ENCODE measurements at regions of chr10 and their contacts with region 1.

Region 1: DNA sequence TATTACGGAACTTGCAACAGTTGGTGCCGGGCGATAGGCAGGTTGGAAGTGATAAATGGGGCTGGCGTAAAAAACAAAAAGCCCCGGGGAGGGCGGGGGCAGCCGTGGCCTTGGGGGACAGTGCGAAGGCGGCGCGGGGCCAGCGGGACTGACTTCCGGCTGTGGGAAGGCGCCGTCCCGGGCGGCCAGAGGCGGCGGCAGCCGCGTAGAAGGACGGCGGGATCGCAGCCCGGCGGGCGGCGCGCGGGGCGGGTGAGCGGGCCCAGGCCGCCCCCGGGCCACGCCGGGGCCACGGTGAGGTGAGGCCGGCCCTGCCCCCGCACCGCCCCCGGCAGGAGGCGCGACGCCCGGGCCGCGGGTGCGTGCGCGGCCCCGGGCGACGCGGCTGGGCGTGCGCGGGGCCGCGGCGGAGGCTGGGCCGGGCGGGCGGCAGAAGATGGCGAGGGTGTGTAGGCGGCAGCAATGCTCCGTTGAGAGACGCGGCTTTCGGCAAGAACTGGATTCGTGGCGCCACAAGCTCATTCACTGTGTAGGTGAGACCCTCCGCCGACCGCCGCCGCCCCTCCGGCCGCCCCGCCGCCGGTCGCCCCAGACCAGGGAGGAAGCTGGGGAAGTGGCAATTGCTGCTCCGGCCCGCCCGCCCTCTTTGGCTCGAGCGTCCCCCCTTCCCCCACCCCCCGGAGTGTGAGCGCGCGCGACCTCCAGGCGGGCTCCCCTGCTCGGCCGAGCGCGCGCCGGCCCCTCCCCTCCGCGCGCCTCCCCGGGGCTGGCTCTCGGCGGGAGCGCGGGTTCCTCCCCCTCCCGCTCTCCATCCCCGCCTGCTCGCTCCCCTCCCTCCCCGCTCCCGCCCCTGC is at the start of gene LCOR:
- DNase-seq: peak; percentile 72
- ATAC-seq: peak; percentile 64
- H3K4me3 ChIP-seq: peak within 1 kb of the TSS; percentile 95
- H3K27ac ChIP-seq: peak within 1 kb of the TSS; percentile 58
- H3K4me1 ChIP-seq: peaks cover 27% of the 10 kb centered on the region
- H3K27me3 ChIP-seq: no peaks in the 10 kb centered on the region
- CTCF ChIP-seq: no peak
- total RNA-seq, gene LCOR: 10.5 and 21.0 TPM in 2 replicates

Region 2: DNA sequence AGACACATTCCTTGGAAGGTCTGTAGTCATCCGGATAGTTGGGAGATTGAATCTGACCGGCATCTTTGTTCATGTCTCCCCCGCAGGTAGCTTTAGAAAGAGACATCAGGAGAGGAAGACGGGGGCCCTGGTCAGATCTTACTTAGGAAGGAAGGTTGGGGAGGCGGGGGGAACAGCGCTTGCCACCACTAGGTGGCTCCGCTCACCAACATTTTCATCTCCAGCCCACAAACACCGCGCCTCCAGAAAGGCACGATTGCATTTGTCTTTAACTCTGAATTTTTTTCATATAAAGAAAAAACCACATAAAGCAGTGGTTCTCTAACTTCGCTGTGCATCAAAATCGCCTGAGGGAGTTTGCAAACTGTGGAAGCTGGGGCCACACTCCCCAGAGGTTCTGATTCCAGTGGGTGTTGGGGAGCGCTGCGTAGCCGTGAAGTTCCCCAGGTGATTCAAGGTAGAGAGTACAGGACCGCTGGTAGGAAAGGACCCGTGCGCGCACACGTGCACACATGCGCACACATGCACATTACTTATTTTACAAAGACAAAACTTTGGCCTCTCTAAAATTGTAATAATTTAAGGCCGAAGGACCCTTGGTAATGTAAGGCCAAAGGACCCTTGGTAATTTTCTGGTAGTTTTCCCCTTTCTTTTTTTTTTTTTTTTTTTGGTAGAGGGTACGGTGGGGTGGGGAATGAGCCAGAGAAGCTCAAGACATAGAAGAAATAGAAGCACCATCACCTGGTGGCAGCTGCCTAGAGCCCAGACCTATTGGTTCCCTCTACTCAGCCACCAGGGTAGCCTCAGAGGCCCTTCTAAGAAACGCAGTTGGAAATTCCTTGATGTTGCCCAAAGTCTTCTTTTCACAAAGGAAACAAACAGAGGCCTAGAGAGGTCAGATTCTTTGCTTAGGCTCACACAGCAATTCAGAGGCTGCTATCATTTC is 435.9 kb before region 1 on chr10:
- CTCF ChIA-PET with region 1: no interaction called
- POLR2A ChIA-PET with region 1: no interaction called
- intact Hi-C with region 1: loop called (anchors 1 kb)
- DNase-seq: peak; percentile 62
- ATAC-seq: peak; percentile 80
- H3K4me3 ChIP-seq: no peak overlapping the region
- H3K27ac ChIP-seq: no peak overlapping the region
- H3K4me1 ChIP-seq: no peaks in the 10 kb centered on the region
- H3K27me3 ChIP-seq: peaks cover 86% of the 10 kb centered on the region
- CTCF ChIP-seq: peak; percentile 83

Region 3: DNA sequence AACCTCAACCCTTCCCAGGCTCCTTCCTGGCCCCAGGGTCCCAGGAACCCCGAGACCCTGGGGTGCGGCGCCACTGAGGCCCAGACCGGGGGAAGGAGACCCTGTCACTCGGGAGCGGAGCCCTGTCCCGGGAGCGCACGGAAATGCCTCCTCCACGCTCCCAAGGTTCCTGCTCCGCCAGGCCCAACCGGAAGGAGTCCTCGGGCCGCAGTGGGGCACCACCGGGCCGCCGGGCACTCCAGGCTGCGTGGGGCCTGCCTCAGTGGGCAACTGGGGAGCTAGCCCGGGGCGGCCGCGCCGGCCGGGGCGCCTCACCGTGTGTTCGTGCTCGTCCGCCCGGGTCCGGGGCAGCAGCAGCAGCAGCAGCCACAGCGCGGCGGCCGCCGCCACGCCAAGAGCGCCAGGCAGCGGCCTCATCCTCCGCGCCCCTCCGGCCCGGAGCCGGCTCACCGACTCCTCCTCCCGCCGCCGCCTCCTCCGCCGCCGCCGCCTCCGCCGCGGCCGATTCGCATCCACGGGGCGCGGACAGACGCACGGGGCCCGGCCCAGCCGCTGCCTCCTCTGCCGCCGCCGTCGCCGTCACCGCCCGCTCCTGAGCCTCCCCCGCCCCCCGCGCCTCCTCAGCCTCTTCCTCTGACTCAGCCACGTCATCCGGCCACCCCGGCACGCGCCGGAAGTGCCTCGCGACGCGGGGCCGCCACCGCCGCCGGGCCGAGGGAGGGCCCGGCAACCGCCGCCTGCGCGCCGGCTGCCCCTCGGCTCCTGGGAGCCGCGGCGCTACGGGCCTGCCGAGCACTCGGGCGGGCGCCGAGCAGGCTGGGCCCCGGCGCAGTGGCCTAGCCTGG is 245.5 kb before region 1 on chr10 and contains the start of gene TM9SF3:
- CTCF ChIA-PET with region 1: no interaction called
- POLR2A ChIA-PET with region 1: no interaction called
- intact Hi-C with region 1: loop called (anchors 1 kb)
- DNase-seq: peak; percentile 84
- ATAC-seq: peak; percentile 79
- H3K4me3 ChIP-seq: peak within 1 kb of the TSS; percentile 87
- H3K27ac ChIP-seq: peak within 1 kb of the TSS; percentile 70
- H3K4me1 ChIP-seq: peaks cover 19% of the 10 kb centered on the region; the same call in 1 of the 2 replicates
- H3K27me3 ChIP-seq: no peaks in the 10 kb centered on the region
- CTCF ChIP-seq: no peak
- total RNA-seq, gene TM9SF3: 39.2 and 47.0 TPM in 2 replicates

Region 4: GRCh38 chr10:96651998-96652431 is 180.1 kb before region 1 on chr10:
- CTCF ChIA-PET with region 1: no interaction called
- POLR2A ChIA-PET with region 1: no interaction called
- intact Hi-C with region 1: no loop called
- DNase-seq: no peak
- ATAC-seq: no peak
- H3K4me3 ChIP-seq: no peak overlapping the region
- H3K27ac ChIP-seq: no peak overlapping the region
- H3K4me1 ChIP-seq: no peaks in the 10 kb centered on the region
- H3K27me3 ChIP-seq: no peaks in the 10 kb centered on the region
- CTCF ChIP-seq: no peak

Region 5: GRCh38 chr10:96719850-96720421 is 112.2 kb before region 1 on chr10:
- CTCF ChIA-PET with region 1: no interaction called
- POLR2A ChIA-PET with region 1: no interaction called
- intact Hi-C with region 1: loop called (anchors 5 kb)
- DNase-seq: peak; percentile 47
- ATAC-seq: peak; percentile 72
- H3K4me3 ChIP-seq: peak overlapping the region; percentile 77
- H3K27ac ChIP-seq: no peak overlapping the region
- H3K4me1 ChIP-seq: peaks cover 11% of the 10 kb centered on the region
- H3K27me3 ChIP-seq: no peaks in the 10 kb centered on the region
- CTCF ChIP-seq: peak; percentile 61

Region 6: DNA sequence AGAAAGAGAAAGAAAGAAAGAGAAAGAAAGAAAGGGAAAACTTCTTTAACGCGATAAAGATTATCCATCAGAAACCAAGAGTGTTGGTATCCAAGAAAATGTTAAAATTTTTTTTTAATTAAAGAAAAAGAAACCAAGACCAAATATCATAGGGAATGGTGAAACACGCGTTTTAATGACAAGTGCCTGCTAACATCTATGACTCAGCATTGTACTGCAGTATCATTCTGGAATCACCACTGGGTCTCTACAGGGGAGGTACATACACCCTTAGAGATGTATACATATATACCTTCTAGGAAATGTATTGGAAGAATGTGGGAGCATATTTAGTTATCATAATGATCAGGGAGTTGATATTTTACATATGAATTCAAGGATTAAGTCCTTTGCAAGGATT is 79.7 kb before region 1 on chr10:
- CTCF ChIA-PET with region 1: no interaction called
- POLR2A ChIA-PET with region 1: no interaction called
- intact Hi-C with region 1: no loop called
- DNase-seq: peak; percentile 8
- ATAC-seq: 0 out of 2 replicates have a peak, but pooled peaks have one; percentile 50
- H3K4me3 ChIP-seq: no peak overlapping the region
- H3K27ac ChIP-seq: no peak overlapping the region
- H3K4me1 ChIP-seq: peaks cover 3% of the 10 kb centered on the region; the same call in 1 of the 2 replicates
- H3K27me3 ChIP-seq: no peaks in the 10 kb centered on the region
- CTCF ChIP-seq: no peak

Region 7: DNA sequence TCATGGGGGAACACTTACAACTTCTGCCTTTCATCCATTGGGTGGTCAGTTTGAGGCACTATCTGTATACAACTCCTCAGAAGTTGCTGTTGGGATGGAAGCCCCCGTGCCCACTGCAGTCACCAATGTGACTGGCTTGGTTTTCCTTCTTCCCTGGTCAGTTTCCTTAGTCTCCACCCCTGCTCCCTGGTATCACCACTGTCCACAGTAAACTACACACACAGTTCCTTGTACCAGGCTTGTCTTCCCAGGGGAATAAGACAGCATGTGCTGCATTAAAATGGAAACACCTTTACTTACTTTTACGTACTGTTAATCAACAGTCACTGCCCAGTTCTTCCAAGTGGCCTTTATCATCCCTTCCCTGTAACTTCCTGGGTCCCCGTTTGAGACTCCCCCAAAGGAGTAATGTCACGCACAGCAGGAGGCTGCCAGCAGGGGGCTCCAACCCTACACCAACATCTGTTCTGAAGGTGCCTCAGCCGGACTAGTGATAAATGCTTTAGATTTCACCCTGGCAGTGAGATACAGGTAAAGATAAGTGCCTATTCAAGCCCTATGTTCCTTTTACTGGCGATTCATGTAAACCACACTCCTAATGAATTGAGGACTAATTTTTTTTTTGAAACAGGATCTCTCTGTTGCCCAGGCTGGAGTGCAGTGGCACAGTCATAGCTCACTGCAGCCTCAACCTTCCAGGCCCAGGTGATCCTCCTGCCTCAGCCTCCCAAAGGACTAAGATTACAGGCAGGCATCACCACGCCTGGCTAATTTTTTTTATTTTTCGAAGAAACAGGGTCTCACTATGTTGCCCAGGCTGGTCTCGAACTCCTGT is 66.5 kb before region 1 on chr10:
- CTCF ChIA-PET with region 1: no interaction called
- POLR2A ChIA-PET with region 1: no interaction called
- intact Hi-C with region 1: loop called (anchors 1 kb)
- DNase-seq: peak; percentile 66
- ATAC-seq: peak; percentile 73
- H3K4me3 ChIP-seq: no peak overlapping the region
- H3K27ac ChIP-seq: no peak overlapping the region
- H3K4me1 ChIP-seq: no peaks in the 10 kb centered on the region
- H3K27me3 ChIP-seq: no peaks in the 10 kb centered on the region
- CTCF ChIP-seq: peak; percentile 88

Region 8: GRCh38 chr10:96803318-96803664 is 28.8 kb before region 1 on chr10:
- CTCF ChIA-PET with region 1: no interaction called
- POLR2A ChIA-PET with region 1: no interaction called
- intact Hi-C with region 1: no loop called
- DNase-seq: no peak
- ATAC-seq: no peak
- H3K4me3 ChIP-seq: no peak overlapping the region
- H3K27ac ChIP-seq: no peak overlapping the region
- H3K4me1 ChIP-seq: no peaks in the 10 kb centered on the region
- H3K27me3 ChIP-seq: no peaks in the 10 kb centered on the region
- CTCF ChIP-seq: no peak

Region 9: GRCh38 chr10:97025613-97026242 is 193.6 kb after region 1 on chr10:
- CTCF ChIA-PET with region 1: no interaction called
- POLR2A ChIA-PET with region 1: no interaction called
- intact Hi-C with region 1: loop called (anchors 5 kb)
- DNase-seq: peak; percentile 25
- ATAC-seq: no peak
- H3K4me3 ChIP-seq: no peak overlapping the region
- H3K27ac ChIP-seq: no peak overlapping the region
- H3K4me1 ChIP-seq: peaks cover 35% of the 10 kb centered on the region
- H3K27me3 ChIP-seq: no peaks in the 10 kb centered on the region
- CTCF ChIP-seq: peak; percentile 65